ENCODE measurements at regions of chr1 and their contacts with region 1.

Region 1: GRCh38 chr1:42941640-42942330 is 16.9 kb downstream of the SLC2A1 start:
- DNase-seq: peak in 3 of 14 experiments; percentile 39 to 57 (median 45)
- ATAC-seq: no peak
- H3K4me3 ChIP-seq: no peak overlapping the region
- H3K4me3 Mint-ChIP-seq: no peak overlapping the region
- H3K27ac ChIP-seq: peak overlapping the region in 1 of 2 donors; percentile 42
- H3K27ac Mint-ChIP-seq: peak overlapping the region; percentile 80
- H3K4me1 ChIP-seq: peaks cover 100% of the 10 kb centered on the region
- H3K4me1 Mint-ChIP-seq: peaks cover 93% of the 10 kb centered on the region
- H3K27me3 ChIP-seq: no peaks in the 10 kb centered on the region
- H3K27me3 Mint-ChIP-seq: no peaks in the 10 kb centered on the region
- CTCF ChIP-seq: no peak

Region 2: GRCh38 chr1:42952303-42953001 is 10.7 kb after region 1 on chr1:
- CTCF ChIA-PET with region 1: interaction called, 4 read pairs
- POLR2A ChIA-PET with region 1: interaction called, 35 read pairs
- intact Hi-C with region 1: no loop called
- DNase-seq: peak in 10 of 14 experiments; percentile 24 to 73 (median 48)
- ATAC-seq: peak; percentile 79
- H3K4me3 ChIP-seq: peak overlapping the region; percentile 3
- H3K4me3 Mint-ChIP-seq: peak overlapping the region; percentile 54
- H3K27ac ChIP-seq: peak overlapping the region; percentile 33 to 43
- H3K27ac Mint-ChIP-seq: peak overlapping the region; percentile 5
- H3K4me1 ChIP-seq: peaks cover 94% of the 10 kb centered on the region
- H3K4me1 Mint-ChIP-seq: peaks cover 93% of the 10 kb centered on the region
- H3K27me3 ChIP-seq: no peaks in the 10 kb centered on the region
- H3K27me3 Mint-ChIP-seq: no peaks in the 10 kb centered on the region
- CTCF ChIP-seq: no peak

Region 3: GRCh38 chr1:42958488-42959319 is 16.9 kb after region 1 on chr1 and contains the start of gene SLC2A1:
- CTCF ChIA-PET with region 1: interaction called, 4 read pairs
- POLR2A ChIA-PET with region 1: interaction called, 35 read pairs
- intact Hi-C with region 1: no loop called
- DNase-seq: peak; percentile 89 to 98 (median 94)
- ATAC-seq: peak; percentile 90
- H3K4me3 ChIP-seq: peak within 1 kb of the TSS; percentile 89
- H3K4me3 Mint-ChIP-seq: peak within 1 kb of the TSS; percentile 100
- H3K27ac ChIP-seq: peak within 1 kb of the TSS; percentile 73 to 76
- H3K27ac Mint-ChIP-seq: peak within 1 kb of the TSS; percentile 96
- H3K4me1 ChIP-seq: peaks cover 54% of the 10 kb centered on the region
- H3K4me1 Mint-ChIP-seq: peaks cover 60% of the 10 kb centered on the region
- H3K27me3 ChIP-seq: no peaks in the 10 kb centered on the region
- H3K27me3 Mint-ChIP-seq: no peaks in the 10 kb centered on the region
- CTCF ChIP-seq: no peak
- total RNA-seq, gene SLC2A1: 78.6 to 80.9 TPM

Measured in CD4-positive, alpha-beta T cell (primary cell).